ENCODE measurements at regions of chr20 and their contacts with region 1.

Region 1: DNA sequence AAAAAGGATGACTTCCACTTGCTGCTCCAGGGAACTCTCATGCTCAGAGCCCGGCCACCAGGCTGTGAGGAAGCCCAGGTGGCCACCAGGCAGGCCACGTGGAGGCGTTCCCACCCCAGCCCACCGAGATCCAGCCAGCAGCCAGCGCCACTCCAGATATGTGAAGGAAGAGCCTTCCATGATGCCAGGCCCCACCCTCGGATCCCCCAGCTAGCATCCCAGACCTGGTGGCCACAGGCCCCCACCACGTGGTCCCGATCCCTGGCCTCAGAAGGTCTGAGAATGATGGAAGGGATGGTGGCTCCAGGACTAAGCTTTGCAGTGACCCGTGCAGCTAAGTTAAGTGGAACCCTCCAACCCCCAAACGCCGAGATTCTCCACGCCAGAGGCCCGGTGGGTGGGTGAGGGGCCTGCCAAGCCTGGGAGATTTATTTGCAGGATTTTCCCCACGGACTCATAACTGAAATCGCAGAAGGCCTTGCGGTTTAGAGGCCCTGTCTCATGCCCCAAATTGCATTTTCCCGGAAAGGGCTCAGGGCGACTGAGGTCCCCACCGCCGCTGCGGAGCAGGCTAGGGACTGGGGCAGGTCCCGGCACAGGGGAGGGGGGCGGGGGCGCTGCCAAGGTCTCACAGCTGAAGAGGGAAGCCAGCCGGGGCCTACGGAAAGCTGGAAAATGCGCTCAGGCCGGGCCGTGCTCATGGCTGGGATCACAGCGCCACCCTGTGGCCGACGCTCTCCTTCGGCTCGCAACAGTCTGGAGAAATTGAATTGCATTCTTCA is 31.1 kb upstream of the CST7 start:
- DNase-seq: peak; percentile 80
- ATAC-seq: peak; percentile 98
- H3K4me3 ChIP-seq: no peak overlapping the region
- H3K27ac ChIP-seq: no peak overlapping the region
- H3K4me1 ChIP-seq: no peaks in the 10 kb centered on the region
- H3K27me3 ChIP-seq: peaks cover 35% of the 10 kb centered on the region
- CTCF ChIP-seq: peak; percentile 95

Region 2: DNA sequence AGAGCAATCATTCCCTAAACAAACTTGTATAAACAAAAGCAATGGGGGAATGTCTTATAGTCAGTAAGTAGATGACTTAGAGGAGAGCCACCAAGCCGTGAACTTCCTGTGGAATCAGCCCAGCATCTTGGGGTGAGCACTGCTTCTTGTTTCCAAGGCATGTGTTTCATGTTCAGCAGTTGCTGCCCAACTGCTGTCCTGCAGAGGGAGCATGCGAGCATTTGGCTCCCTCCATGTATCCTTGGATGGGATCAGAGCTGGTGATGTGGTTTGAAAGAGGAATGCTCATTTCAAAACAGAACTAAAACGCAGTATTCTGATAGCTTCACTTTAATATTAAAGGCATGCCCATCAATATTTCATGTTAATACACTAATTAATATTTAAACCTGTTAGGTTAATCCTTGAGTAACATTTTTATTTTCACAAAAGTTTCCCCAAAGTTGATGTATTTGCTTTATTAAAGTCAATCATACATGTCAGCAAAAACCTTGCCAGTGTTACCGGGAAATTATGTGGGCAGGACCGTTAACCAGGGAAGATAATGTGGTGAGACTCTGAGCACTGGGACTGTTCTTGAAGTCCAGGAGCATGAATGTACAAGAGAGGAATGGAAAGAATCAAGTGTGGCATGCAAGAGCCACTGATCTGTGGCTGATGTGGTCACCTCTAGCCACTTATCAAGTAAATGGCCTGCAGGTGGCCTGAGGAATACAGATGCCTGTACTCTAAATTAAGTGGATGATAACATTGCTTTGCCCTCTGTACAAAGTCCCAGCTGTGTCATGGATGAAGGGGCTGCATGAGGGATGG is 757.2 kb before region 1 on chr20:
- CTCF ChIA-PET with region 1: no interaction called
- POLR2A ChIA-PET with region 1: no interaction called
- intact Hi-C with region 1: loop called (anchors 2 kb)
- DNase-seq: peak; percentile 71
- ATAC-seq: peak; percentile 57; the same call in 1 of the 2 replicates
- H3K4me3 ChIP-seq: no peak overlapping the region
- H3K27ac ChIP-seq: no peak overlapping the region
- H3K4me1 ChIP-seq: no peaks in the 10 kb centered on the region
- H3K27me3 ChIP-seq: no peaks in the 10 kb centered on the region
- CTCF ChIP-seq: peak; percentile 88

Region 3: DNA sequence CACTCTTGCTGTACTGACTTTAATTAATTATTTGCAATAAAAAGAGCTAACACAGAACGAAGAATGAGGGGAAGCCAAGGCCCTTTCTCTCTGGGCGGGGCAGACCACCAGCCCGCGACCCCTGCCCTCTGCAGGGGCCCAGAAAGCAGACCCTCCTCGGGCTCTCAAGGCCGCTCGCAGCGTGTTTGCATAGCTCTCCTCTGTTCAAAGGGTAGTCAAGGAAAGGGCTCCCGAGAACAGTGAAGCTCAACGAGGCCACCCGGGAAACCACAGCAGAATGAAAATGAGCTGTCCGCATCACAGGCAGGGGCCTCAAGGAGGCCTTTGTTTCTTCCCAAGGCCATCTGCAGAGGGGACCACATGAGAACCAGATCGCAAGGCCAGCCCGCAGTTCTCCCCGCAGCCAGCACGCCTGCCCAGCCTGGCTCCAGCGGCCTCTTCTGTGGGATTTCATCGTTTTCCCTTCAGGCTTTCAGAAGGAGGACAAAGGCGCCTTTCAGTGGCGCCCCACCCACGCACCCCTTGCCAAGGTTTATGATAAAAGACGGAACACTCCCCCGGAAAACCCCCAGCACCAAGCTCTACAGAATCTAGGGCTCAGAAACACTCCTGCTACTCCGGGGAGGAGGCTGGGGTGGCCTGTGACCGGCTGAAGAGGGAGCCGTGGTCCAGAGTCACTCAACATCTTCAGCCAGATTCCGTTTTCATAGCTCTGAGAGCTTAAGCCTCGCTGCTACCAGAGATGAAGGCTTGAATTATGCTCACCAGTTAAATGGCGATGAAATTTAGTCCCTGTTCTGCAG is 114.7 kb after region 1 on chr20:
- CTCF ChIA-PET with region 1: no interaction called
- POLR2A ChIA-PET with region 1: no interaction called
- intact Hi-C with region 1: no loop called
- DNase-seq: no peak
- ATAC-seq: no peak
- H3K4me3 ChIP-seq: no peak overlapping the region
- H3K27ac ChIP-seq: no peak overlapping the region
- H3K4me1 ChIP-seq: no peaks in the 10 kb centered on the region
- H3K27me3 ChIP-seq: no peaks in the 10 kb centered on the region
- CTCF ChIP-seq: no peak